ENCODE measurements at regions of chr6 and their contacts with region 1.

Region 1: GRCh38 chr6:56475736-56476457 is 166.8 kb downstream of the DST start:
- DNase-seq: peak in 4 of 5 donors; percentile 43 to 68 (median 52)
- ATAC-seq: peak; percentile 73 to 89 (median 86)
- H3K4me3 ChIP-seq: no peak overlapping the region
- H3K27ac ChIP-seq: peak overlapping the region in 4 of 12 donors; percentile 20 to 26 (median 22)
- H3K4me1 ChIP-seq: peaks cover 0 to 26% (median 15%) of the 10 kb centered on the region in 12 donors
- H3K27me3 ChIP-seq: no peaks in the 10 kb centered on the region
- CTCF ChIP-seq: no peak
- POLR2A ChIP-seq: no peak

Region 2: GRCh38 chr6:56091159-56091869 is 384.6 kb before region 1 on chr6:
- intact Hi-C with region 1: no loop called
- DNase-seq: peak in 1 of 5 donors; percentile 12
- ATAC-seq: peak; percentile 66 to 85 (median 82)
- H3K4me3 ChIP-seq: peak overlapping the region; percentile 5 to 56 (median 50)
- H3K27ac ChIP-seq: peak overlapping the region; percentile 72 to 93 (median 82)
- H3K4me1 ChIP-seq: peaks cover 0 to 10% (median 0%) of the 10 kb centered on the region in 12 donors
- H3K27me3 ChIP-seq: no peaks in the 10 kb centered on the region
- CTCF ChIP-seq: no peak
- POLR2A ChIP-seq: peak in 1 of 2 donors; percentile 21

Region 3: DNA sequence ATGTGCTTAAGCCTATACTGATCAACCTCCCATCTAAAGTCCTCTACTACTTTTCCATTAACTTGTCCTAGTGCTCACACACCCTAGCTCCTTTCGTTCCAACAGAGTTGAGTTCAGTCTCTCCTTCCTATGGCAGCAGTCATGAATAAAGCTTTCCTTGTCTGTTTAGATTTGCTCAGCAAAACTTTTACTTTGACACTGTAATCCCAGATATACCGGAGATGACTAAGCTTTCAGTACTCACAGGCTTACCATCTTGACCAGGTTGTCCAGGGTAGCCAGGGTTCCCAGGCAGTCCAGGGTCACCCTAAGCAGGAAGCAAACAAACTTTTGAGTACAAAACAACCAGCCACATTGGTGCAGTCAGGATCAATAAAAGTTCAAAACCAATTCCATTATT is 319.3 kb before region 1 on chr6:
- intact Hi-C with region 1: no loop called
- DNase-seq: no peak
- ATAC-seq: no peak
- H3K4me3 ChIP-seq: no peak overlapping the region
- H3K27ac ChIP-seq: no peak overlapping the region
- H3K4me1 ChIP-seq: no peaks in the 10 kb centered on the region
- H3K27me3 ChIP-seq: no peaks in the 10 kb centered on the region
- CTCF ChIP-seq: no peak
- POLR2A ChIP-seq: no peak

Region 4: GRCh38 chr6:56517155-56517745 is 41.4 kb after region 1 on chr6:
- intact Hi-C with region 1: no loop called
- DNase-seq: no peak
- ATAC-seq: peak in 3 of 4 donors; percentile 33 to 52 (median 36)
- H3K4me3 ChIP-seq: no peak overlapping the region
- H3K27ac ChIP-seq: peak overlapping the region in 8 of 12 donors; percentile 3 to 74 (median 30)
- H3K4me1 ChIP-seq: peaks cover 0 to 57% (median 29%) of the 10 kb centered on the region in 12 donors
- H3K27me3 ChIP-seq: no peaks in the 10 kb centered on the region
- CTCF ChIP-seq: no peak
- POLR2A ChIP-seq: no peak

Region 5: DNA sequence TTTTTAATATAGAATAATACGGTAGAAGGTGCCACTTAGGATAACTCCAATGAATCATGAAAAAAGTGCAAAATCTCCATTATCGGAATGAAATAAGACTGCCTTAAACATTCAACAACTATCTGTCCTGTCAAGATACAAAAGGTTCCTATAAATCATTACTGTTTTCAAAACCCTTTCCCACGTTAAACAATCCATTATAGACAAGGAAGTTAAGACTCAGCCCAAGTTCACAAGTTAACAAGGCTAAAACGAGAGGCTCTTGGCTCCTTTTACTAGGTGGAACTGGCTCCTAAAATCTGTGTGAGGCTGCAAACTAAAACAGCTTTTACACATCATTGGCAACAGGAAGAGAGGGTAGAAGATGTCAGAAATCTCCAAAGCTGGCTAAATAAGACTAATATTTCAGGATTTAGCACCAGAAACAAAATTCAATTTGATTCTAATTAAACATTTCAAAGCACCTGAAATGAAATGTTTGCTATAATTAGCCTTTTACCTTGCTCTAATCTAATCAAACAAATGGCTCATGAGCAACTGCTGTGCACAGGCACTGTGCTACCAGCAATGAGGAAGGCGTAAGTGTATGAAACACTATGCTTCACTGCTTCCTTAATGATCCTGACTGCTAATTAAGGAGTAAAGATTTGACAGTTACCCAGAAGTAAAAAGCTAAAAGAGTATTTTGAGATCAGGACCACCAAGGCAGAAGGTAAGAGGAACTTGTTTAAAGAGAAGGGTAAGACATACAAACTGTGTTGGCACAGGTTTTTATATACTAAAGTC is 57.1 kb after region 1 on chr6:
- intact Hi-C with region 1: loop called in 2 of 10 experiments (anchors 10 kb)
- DNase-seq: no peak
- ATAC-seq: no peak
- H3K4me3 ChIP-seq: no peak overlapping the region
- H3K27ac ChIP-seq: peak overlapping the region in 1 of 12 donors; percentile 62
- H3K4me1 ChIP-seq: peaks cover 0 to 34% (median 24%) of the 10 kb centered on the region in 12 donors
- H3K27me3 ChIP-seq: no peaks in the 10 kb centered on the region
- CTCF ChIP-seq: no peak
- POLR2A ChIP-seq: no peak

Measured in heart left ventricle (tissue), 16 donors.